Naive thymus-derived CD4-positive, alpha-beta T cell (primary cell): ENCODE measurements at regions of chr9 and their contacts with region 1.

Region 1: DNA sequence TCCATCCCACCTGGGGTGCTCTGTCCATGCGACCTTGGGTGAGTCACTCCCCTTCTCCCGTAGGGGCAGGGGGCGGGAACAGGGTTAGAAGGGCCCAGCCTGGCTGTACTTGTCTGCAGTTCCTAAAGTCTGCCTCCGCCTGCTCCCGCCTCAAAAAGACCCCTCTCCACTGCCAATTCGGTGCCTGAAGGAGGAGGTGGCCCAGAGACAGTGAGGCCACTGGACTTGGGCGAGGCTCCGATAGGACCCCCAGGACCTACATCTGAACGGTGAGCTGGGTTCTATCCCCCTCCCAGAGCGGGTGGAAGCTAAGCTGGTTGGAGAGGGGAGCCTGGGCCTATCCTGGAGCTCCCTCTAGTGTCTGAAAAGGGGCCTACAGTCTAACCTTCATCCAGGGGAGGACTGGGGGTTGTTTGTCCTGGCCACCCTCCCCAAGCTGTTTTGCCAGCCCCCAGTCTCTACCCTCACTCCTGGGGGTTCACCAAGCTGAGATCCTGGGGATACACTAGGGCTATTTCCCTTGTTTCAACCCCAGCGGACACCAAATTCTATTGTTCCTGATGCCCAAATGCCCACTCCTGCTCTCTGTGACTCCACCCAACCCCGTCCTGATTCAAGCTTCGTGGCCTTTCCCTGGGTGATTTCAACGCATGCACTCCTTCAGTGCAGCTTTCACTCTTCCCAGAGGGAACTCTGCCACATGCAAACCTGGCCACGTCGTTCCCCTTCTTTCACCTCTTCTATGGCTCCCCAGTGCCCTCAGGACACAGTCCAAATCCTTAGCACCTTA is 6.1 kb upstream of the CRB2 start:
- DNase-seq: peak; percentile 33 to 80 (median 65)
- ATAC-seq: peak; percentile 85
- H3K4me3 ChIP-seq: no peak overlapping the region
- H3K4me3 Mint-ChIP-seq: no peak overlapping the region
- H3K27ac ChIP-seq: no peak overlapping the region
- H3K27ac Mint-ChIP-seq: peak overlapping the region in 2 of 9 donors; percentile 34 to 35
- H3K4me1 ChIP-seq: no peaks in the 10 kb centered on the region
- H3K4me1 Mint-ChIP-seq: peaks cover 0 to 5% (median 4%) of the 10 kb centered on the region in 7 donors
- H3K27me3 ChIP-seq: no peaks in the 10 kb centered on the region
- H3K27me3 Mint-ChIP-seq: peaks cover 0 to 9% (median 0%) of the 10 kb centered on the region in 5 donors

Region 2: GRCh38 chr9:122810306-122810946 is 539.5 kb before region 1 on chr9:
- CTCF ChIA-PET with region 1: no interaction called
- POLR2A ChIA-PET with region 1: no interaction called
- intact Hi-C with region 1: loop called (anchors 10 kb)
- DNase-seq: peak; percentile 52 to 79 (median 72)
- ATAC-seq: peak; percentile 95
- H3K4me3 ChIP-seq: no peak overlapping the region
- H3K4me3 Mint-ChIP-seq: no peak overlapping the region
- H3K27ac ChIP-seq: no peak overlapping the region
- H3K27ac Mint-ChIP-seq: no peak overlapping the region
- H3K4me1 ChIP-seq: peaks cover 0 to under 1% of the 10 kb centered on the region in 2 donors
- H3K4me1 Mint-ChIP-seq: peaks cover 9 to 24% (median 16%) of the 10 kb centered on the region in 7 donors
- H3K27me3 ChIP-seq: no peaks in the 10 kb centered on the region
- H3K27me3 Mint-ChIP-seq: no peaks in the 10 kb centered on the region

Region 3: GRCh38 chr9:122991370-122991830 is 358.5 kb before region 1 on chr9:
- CTCF ChIA-PET with region 1: interaction called, 12 read pairs
- POLR2A ChIA-PET with region 1: no interaction called
- intact Hi-C with region 1: loop called (anchors 1 to 2 kb)
- DNase-seq: peak in 8 of 9 donors; percentile 1 to 37 (median 14)
- ATAC-seq: peak; percentile 81
- H3K4me3 ChIP-seq: no peak overlapping the region
- H3K4me3 Mint-ChIP-seq: no peak overlapping the region
- H3K27ac ChIP-seq: no peak overlapping the region
- H3K27ac Mint-ChIP-seq: no peak overlapping the region
- H3K4me1 ChIP-seq: no peaks in the 10 kb centered on the region
- H3K4me1 Mint-ChIP-seq: peaks cover 0 to 6% (median 4%) of the 10 kb centered on the region in 7 donors
- H3K27me3 ChIP-seq: no peaks in the 10 kb centered on the region
- H3K27me3 Mint-ChIP-seq: no peaks in the 10 kb centered on the region

Region 4: DNA sequence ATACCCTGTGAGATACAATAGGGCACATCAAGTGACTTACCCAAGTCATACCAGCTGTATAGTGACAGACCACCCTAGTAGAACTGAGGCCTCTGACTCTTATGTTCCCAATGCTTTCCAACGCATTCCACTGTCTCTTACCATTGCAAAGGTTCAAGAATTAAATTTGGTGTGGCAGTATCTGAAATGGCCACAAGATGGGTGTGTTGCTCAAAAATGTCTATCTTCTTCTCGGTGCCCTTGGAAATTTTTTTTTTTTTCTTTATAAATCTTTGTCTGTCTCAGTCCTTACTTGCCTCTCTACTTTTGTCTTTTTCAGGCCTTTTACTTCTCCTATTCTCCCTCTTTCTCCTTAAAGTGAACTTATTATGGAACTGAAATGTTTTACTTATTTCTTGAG is 268.1 kb before region 1 on chr9:
- CTCF ChIA-PET with region 1: interaction called, 38 read pairs
- POLR2A ChIA-PET with region 1: no interaction called
- intact Hi-C with region 1: loop called (anchors 1 kb)
- DNase-seq: peak in 6 of 9 donors; percentile 15 to 38 (median 30)
- ATAC-seq: peak; percentile 32
- H3K4me3 ChIP-seq: no peak overlapping the region
- H3K4me3 Mint-ChIP-seq: no peak overlapping the region
- H3K27ac ChIP-seq: no peak overlapping the region
- H3K27ac Mint-ChIP-seq: no peak overlapping the region
- H3K4me1 ChIP-seq: no peaks in the 10 kb centered on the region
- H3K4me1 Mint-ChIP-seq: peaks cover 0 to 5% (median 0%) of the 10 kb centered on the region in 7 donors
- H3K27me3 ChIP-seq: no peaks in the 10 kb centered on the region
- H3K27me3 Mint-ChIP-seq: no peaks in the 10 kb centered on the region

Region 5: GRCh38 chr9:123111427-123112014 is 238.4 kb before region 1 on chr9:
- CTCF ChIA-PET with region 1: interaction called, 5 read pairs
- POLR2A ChIA-PET with region 1: no interaction called
- intact Hi-C with region 1: loop called in 1 of 2 experiments (anchors 2 kb)
- DNase-seq: peak in 1 of 9 donors; percentile 18
- ATAC-seq: peak; percentile 23
- H3K4me3 ChIP-seq: no peak overlapping the region
- H3K4me3 Mint-ChIP-seq: peak overlapping the region in 6 of 10 donors; percentile 13 to 62 (median 36)
- H3K27ac ChIP-seq: peak overlapping the region; percentile 10
- H3K27ac Mint-ChIP-seq: peak overlapping the region; percentile 58 to 94 (median 87)
- H3K4me1 ChIP-seq: peaks cover 0 to 7% of the 10 kb centered on the region in 2 donors
- H3K4me1 Mint-ChIP-seq: peaks cover 12 to 27% (median 23%) of the 10 kb centered on the region in 7 donors
- H3K27me3 ChIP-seq: no peaks in the 10 kb centered on the region
- H3K27me3 Mint-ChIP-seq: no peaks in the 10 kb centered on the region

Region 6: DNA sequence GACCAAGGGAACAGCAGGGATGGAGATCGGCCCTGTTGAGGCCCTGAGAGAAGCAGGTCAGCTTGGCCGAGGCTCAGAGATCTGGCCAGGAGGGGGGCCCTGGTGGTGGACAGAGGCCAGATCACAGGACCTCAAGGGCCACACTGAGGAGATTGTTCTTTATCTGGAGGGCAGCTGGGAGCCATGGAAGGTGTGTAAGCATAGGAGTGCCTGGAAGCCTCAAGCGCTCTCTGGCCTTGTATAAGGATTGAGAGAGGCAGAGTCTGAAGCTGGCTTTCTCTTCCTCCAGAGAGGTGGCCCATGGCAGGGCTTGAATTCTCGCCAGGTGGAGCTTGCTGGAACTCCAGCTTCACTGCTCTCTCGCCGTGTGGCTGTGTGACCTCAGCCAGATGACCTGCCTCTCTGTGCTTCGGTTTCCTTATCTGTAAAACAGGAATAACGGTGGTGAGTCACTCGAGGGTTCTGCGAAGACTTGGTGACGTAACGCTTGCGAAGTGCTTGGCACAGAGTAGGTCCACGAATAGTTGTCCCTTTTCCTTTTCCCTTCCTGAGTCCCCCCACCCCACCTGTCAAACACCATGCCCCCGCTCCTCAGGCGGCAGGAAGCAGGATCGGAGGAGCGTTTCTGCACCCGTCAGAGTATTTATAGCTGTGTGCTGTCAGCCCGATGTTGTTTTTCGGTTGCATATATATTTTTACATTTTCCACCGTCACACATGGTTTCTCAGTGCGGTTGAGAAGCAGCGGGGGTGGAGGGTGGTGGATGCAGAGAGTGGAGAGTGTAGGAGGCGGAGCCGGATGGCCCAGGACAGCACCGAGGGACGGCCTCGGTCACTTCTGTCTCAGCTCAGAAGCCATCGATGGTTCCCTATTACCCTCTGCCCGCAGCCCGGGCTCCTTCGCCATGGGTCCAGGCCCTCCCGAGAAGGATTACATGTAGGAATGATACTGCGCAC is 10.9 kb before region 1 on chr9:
- CTCF ChIA-PET with region 1: interaction called, 16 read pairs
- POLR2A ChIA-PET with region 1: interaction called, 3 read pairs
- intact Hi-C with region 1: no loop called
- DNase-seq: peak; percentile 16 to 79 (median 43)
- ATAC-seq: peak; percentile 79
- H3K4me3 ChIP-seq: peak overlapping the region; percentile 64
- H3K4me3 Mint-ChIP-seq: peak overlapping the region; percentile 80 to 96 (median 89)
- H3K27ac ChIP-seq: peak overlapping the region; percentile 59
- H3K27ac Mint-ChIP-seq: peak overlapping the region; percentile 84 to 95 (median 90)
- H3K4me1 ChIP-seq: peaks cover 15 to 22% of the 10 kb centered on the region in 2 donors
- H3K4me1 Mint-ChIP-seq: peaks cover 19 to 45% (median 43%) of the 10 kb centered on the region in 7 donors
- H3K27me3 ChIP-seq: no peaks in the 10 kb centered on the region
- H3K27me3 Mint-ChIP-seq: no peaks in the 10 kb centered on the region